IMR-90 (cell line): ENCODE measurements at regions of chr2 and their contacts with region 1.

Region 1: DNA sequence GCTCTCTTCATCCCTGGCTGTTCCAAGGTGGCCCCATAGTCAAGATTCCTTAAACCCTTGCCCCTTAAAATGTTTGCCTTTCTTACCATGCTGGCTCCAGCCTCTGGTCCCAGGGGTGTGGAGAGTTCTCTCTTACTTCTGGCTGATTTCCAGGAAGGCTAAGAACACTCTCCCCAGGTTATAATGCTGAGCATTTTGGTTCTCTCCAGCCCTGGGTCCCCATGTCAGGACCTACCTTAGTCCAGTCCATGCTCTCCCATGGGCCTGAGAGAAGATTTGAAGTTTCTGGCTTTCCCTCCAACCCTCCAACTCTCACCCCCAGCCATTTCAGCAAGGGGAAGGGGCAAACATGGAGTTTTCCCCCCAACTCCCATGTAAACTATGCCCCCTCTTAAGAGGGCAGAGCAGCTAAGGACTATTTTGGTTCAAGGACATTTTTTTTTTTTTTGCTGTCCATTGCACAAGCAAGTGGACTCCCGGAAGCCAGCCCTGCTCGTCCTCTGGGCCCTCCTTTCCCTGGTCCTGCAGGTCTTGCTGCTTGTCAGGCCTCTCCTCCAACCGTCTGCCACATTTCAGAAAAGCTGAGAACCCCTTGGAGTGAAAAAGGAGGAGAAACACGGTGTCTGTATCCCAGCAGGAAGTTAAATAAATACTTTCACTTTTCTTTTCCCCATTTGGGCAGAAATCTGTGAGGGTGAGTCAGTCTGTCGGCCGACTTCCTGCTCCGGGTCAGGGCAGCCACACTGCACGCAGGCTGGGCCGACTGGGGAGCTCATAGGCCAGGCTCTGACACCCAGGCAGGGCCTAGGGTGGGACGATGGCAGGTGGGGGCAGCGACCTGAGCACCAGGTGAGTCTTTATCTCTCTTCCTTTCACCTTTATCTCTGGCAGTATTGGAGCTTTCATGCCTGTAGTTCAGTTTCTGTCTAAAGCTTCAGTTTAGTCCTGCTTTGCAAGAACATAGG is at the start of gene SP140L:
- DNase-seq: peak; percentile 84
- ATAC-seq: peak; percentile 99
- H3K4me3 ChIP-seq: peak within 1 kb of the TSS; percentile 87
- H3K27ac ChIP-seq: peak within 1 kb of the TSS; percentile 96
- H3K4me1 ChIP-seq: peaks cover 6% of the 10 kb centered on the region
- H3K27me3 ChIP-seq: no peaks in the 10 kb centered on the region
- CTCF ChIP-seq: no peak
- POLR2A ChIP-seq: peak; percentile 39; the same call in 1 of the 2 replicates
- RAD21 ChIP-seq: 0 out of 2 replicates have a peak, but pooled peaks have one; percentile 5
- total RNA-seq, gene SP140L: 5.4 and 9.2 TPM in 2 replicates

Region 2: DNA sequence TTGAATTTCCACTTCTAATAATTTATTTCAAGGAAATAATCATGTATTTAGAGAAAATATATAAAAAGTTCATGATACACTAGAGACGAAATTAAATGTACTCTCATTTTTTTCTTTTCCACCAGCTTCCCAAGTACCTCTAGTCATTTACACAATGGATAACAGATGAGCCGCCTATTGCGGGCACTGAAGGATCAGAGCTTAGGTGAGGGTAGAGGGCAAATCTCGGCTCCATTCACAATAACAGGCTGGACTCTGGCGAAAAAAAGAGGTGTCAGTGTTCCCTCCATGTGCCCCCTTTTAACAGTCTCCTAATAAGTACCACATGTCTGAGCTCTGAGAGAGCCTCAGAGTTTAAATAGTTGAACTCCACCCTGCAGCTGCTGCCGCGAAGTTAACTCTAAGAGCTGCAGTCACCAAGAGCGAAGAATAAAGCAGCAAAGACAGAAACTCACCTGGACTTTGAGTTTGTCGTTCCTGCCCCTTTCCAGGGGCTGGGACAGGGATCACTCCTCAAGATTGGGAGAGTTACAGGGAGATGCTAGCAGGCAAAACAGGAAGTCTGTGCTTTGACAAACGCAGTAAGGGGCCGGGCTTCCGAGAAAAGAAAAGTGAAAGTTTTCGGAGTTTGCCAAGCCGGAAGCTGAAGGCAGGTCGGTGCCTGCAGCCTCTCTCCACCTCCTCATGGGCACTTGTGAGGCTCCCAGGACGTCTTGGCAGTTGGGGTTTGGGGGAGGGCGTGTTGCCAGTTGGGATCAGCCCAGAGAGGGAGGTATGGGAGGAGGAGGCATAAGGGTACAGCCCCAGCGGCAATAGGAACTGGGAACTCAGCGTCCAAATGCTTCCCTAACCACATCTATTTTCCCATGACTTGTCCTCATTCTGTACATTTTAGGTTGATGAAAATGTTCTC is 107.1 kb before region 1 on chr2 and contains the start of gene SP110:
- CTCF ChIA-PET with region 1: no interaction called
- POLR2A ChIA-PET with region 1: no interaction called
- dilution Hi-C with region 1: no loop called
- in situ Hi-C with region 1: no loop called
- intact Hi-C with region 1: loop called (anchors 5 kb)
- DNase-seq: peak; percentile 80
- ATAC-seq: peak; percentile 93
- H3K4me3 ChIP-seq: peak within 1 kb of the TSS; percentile 94
- H3K27ac ChIP-seq: peak within 1 kb of the TSS; percentile 72
- H3K4me1 ChIP-seq: no peaks in the 10 kb centered on the region
- H3K27me3 ChIP-seq: no peaks in the 10 kb centered on the region
- CTCF ChIP-seq: no peak
- POLR2A ChIP-seq: no peak
- RAD21 ChIP-seq: peak; percentile 10; the same call in 1 of the 2 replicates
- total RNA-seq, gene SP110: 9.3 and 11.1 TPM in 2 replicates